Lower lobe of right lung (tissue), 2 donors: ENCODE measurements at regions of chr14 and their contacts with region 1.

Region 1: DNA sequence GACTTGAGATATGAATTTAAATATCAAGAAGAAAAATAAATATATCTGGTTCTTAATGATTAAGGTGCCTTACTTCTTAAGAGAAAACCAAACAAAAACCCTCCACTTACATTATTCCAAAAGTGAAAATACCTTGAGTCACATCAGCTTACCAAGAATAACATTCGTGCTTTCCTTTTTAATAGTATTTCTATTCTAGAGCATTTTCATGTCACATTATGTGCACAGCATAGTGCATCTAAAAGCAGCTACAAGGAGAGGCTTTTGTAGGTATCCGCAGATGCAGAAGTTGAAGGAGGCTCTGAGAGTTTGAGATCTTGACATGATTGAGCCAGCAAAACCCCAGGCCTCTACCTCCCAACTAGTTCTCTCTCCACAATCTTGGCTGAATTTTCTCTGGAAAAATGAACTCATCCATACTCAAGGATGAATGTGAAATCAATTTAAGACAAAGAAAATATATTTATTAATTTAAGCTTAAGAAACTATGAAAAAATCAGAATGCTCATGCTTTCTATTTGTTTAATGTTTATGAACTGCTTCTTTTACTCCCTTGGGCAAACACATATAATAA is 275.0 kb downstream of the AKAP6 start:
- DNase-seq: no peak
- ATAC-seq: no peak
- H3K4me3 ChIP-seq: no peak overlapping the region
- H3K27ac ChIP-seq: no peak overlapping the region
- H3K4me1 ChIP-seq: no peaks in the 10 kb centered on the region
- H3K27me3 ChIP-seq: no peaks in the 10 kb centered on the region
- CTCF ChIP-seq: no peak

Region 2: GRCh38 chr14:32950584-32950983 is 346.5 kb after region 1 on chr14:
- intact Hi-C with region 1: loop called (anchors 5 kb)
- DNase-seq: no peak
- ATAC-seq: no peak
- H3K4me3 ChIP-seq: no peak overlapping the region
- H3K27ac ChIP-seq: no peak overlapping the region
- H3K4me1 ChIP-seq: no peaks in the 10 kb centered on the region
- H3K27me3 ChIP-seq: no peaks in the 10 kb centered on the region
- CTCF ChIP-seq: no peak